GM13977 (cell line): ENCODE measurements at regions of chr2 and their contacts with region 1.

Region 1: DNA sequence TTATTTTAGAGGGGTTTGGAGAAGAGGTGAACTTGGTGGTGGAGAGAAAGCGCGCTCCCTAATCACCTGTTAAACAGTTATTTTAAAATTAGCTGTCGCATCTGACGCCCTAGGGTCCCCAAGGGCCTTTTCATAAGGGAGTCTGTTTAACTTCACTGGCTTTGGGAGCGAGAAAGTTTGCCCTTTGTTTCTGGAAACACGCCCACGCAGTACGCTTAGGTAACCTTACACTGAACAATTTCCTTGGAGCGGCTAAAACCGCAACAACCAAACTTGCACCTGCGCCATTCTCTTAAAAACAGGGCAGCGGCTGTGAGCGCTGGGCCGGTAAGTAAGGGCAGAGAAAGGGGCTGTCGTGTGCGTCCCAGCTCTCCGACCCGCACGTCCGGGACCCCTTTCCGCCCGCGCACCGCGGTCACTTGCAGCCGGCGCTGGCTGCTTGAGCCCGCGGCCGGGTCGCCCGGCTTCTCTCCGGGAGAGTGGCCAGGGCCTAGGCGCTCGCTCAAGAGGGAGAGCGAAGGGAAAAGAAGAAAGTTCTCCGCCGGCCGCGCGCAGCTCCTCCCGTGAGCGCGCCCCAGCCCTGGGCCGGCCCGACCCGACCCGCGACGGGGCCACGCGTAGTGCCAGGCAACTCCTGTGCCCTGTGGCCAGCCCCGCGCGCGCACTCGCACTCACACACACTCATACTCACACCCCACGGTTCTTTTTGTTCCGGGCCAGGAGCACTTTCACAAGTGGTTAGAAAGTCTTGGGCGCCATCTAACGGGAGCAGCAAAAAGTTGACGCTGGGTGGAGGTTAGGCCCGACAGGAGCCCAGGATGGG is 19.2 kb downstream of the POU3F3 start:
- DNase-seq: peak; percentile 87
- CTCF ChIP-seq: peak; percentile 73

Region 2: GRCh38 chr2:103161456-103162289 is 1711.4 kb before region 1 on chr2:
- in situ Hi-C with region 1: loop called (anchors 25 kb)
- DNase-seq: peak; percentile 42
- CTCF ChIP-seq: peak; percentile 82

Region 3: DNA sequence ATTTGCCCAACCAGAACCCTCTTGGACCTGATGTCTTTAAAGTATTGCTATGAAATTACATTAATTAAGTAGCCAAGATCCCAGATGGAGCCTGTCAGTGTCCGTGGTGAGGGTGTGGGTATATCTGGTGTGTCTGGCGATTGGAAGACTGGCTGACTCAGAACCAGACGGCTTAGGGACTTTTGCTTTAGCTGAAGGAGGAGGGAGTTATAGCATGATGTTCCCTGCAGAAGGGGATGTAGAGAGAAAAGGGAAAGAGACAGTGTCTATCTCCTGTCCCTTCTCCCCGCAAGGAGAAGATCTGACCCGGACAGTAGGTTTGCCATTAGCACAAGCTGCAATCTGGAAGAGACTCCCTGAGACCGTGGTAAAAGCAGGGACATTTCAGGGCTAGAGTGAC is 41.4 kb after region 1 on chr2:
- in situ Hi-C with region 1: no loop called
- DNase-seq: no peak
- CTCF ChIP-seq: no peak